Caco-2 (cell line): ENCODE measurements at regions of chr5 and their contacts with region 1.

Region 1: DNA sequence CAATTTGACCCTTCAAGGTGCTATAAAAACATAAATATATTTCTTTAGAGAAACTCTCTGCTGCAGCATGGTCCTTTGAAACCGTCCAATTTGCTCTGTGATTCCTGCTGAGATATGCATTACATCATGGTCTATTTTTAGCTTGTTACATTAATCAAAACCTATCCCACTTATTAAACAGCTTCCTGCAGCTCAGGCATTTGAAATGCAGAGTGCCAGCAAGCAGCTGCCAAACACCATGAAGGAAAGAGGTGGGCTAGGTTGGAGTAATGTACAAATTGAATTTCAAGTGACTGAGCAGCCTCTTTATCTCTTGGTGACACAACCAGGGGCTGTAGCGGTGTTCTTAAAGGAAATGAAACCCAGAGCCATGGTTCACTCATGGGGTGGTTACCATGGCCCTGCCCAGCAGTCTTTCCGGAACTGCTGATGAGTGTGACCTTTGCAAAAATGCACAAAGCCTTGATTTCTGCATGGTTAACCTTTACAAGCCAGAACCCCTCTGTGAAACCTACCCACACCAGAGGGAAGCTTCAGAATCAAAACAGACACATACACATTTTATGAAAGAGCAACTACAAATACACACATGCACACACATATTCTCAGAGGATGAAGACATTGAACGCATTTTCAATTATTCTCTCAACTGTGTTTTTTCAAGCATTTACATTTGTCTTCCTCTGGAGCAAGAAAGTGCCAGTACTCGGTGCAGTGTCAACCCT is 155.8 kb upstream of the ZNF608 start:
- DNase-seq: no peak
- H3K4me3 ChIP-seq: no peak overlapping the region
- H3K4me3 Mint-ChIP-seq: no peak overlapping the region
- H3K27ac Mint-ChIP-seq: no peak overlapping the region
- H3K4me1 ChIP-seq: peaks cover 14% of the 10 kb centered on the region
- H3K4me1 Mint-ChIP-seq: peaks cover 9% of the 10 kb centered on the region
- H3K27me3 ChIP-seq: no peaks in the 10 kb centered on the region
- H3K27me3 Mint-ChIP-seq: no peaks in the 10 kb centered on the region
- CTCF ChIP-seq: no peak

Region 2: DNA sequence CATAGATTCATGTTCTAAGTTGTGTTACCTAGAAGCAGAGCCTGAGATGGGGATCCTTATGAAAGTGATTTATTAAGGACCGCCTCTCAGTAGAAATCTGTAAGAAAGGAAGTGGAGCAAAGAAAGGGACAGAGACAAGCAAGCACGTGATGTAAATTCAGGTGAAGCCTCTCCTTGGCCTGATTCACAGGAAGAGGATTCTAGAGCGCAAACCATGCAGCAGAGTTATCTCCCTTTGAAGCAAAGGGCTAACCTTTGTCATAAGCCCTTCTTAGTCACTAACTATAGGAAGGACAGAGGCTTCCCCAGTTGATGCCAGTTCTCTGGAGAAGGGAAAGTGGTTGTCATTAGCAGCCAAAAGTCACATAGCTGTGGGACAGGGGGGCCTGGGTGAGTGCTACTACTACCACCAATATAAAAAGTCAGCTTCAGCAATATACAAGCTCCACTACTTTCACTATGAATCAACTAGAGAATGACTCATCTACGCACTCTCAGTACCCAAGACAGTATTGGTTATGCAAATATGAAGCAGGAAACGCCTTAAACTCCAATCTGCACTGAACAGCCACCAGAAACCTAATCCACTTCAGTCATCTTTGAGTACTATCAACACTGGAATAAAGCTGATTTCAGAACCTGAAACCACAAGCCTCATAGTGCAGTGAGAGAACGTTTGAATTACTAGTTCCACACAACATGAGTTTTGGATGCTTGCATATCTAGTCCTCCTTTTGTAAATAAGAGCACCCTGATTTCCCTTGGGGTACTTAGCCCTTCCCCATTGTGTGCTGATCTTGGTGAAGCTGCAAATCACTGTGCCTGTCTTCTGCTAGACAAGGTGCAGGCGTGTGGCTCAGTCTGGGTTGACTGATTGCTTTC is 318.5 kb before region 1 on chr5:
- CTCF ChIA-PET with region 1: no interaction called
- POLR2A ChIA-PET with region 1: no interaction called
- intact Hi-C with region 1: loop called (anchors 10 kb)
- DNase-seq: no peak
- H3K4me3 ChIP-seq: no peak overlapping the region
- H3K4me3 Mint-ChIP-seq: no peak overlapping the region
- H3K27ac Mint-ChIP-seq: peak overlapping the region; percentile 89
- H3K4me1 ChIP-seq: peaks cover 38% of the 10 kb centered on the region
- H3K4me1 Mint-ChIP-seq: peaks cover 30% of the 10 kb centered on the region
- H3K27me3 ChIP-seq: no peaks in the 10 kb centered on the region
- H3K27me3 Mint-ChIP-seq: no peaks in the 10 kb centered on the region
- CTCF ChIP-seq: no peak

Region 3: DNA sequence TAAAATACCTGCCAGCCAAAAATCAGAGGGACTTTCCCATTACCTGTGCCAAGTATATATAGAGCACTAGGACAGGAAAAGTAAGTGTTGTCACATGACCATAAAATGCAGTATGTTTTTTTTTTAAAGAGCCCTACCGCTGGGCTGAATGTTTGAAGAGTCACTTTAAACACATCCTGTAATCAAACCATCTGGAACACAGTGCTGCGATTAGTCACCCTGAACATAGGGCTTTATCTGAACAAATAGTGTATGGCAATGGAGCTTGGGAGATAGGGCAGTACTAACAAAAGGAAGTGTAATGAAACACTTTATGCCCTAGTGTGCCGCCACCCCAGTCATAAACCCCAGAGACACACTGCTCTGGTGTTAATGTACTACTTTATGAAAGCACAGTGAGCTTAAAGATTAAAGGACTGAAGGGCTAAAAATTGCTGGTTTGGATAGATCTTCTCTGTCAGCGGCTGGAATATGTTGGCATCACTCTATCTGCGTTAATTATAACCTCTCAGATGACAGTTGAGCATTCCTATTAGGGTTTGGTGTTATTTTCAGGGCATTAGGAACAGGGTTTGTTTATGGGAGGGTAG is 246.2 kb before region 1 on chr5:
- CTCF ChIA-PET with region 1: no interaction called
- POLR2A ChIA-PET with region 1: no interaction called
- intact Hi-C with region 1: loop called (anchors 1 kb)
- DNase-seq: peak; percentile 80 to 87
- H3K4me3 ChIP-seq: no peak overlapping the region
- H3K4me3 Mint-ChIP-seq: no peak overlapping the region
- H3K27ac Mint-ChIP-seq: no peak overlapping the region
- H3K4me1 ChIP-seq: peaks cover 72% of the 10 kb centered on the region
- H3K4me1 Mint-ChIP-seq: peaks cover 9% of the 10 kb centered on the region
- H3K27me3 ChIP-seq: no peaks in the 10 kb centered on the region
- H3K27me3 Mint-ChIP-seq: no peaks in the 10 kb centered on the region
- CTCF ChIP-seq: no peak

Region 4: GRCh38 chr5:124677374-124678351 is 224.6 kb before region 1 on chr5:
- CTCF ChIA-PET with region 1: no interaction called
- POLR2A ChIA-PET with region 1: no interaction called
- intact Hi-C with region 1: loop called (anchors 5 kb)
- DNase-seq: no peak
- H3K4me3 ChIP-seq: no peak overlapping the region
- H3K4me3 Mint-ChIP-seq: no peak overlapping the region
- H3K27ac Mint-ChIP-seq: peak overlapping the region; percentile 37
- H3K4me1 ChIP-seq: peaks cover 59% of the 10 kb centered on the region
- H3K4me1 Mint-ChIP-seq: peaks cover 42% of the 10 kb centered on the region
- H3K27me3 ChIP-seq: no peaks in the 10 kb centered on the region
- H3K27me3 Mint-ChIP-seq: no peaks in the 10 kb centered on the region
- CTCF ChIP-seq: no peak

Region 5: GRCh38 chr5:124920909-124921666 is 18.8 kb after region 1 on chr5:
- CTCF ChIA-PET with region 1: no interaction called
- POLR2A ChIA-PET with region 1: no interaction called
- intact Hi-C with region 1: no loop called
- DNase-seq: no peak
- H3K4me3 ChIP-seq: no peak overlapping the region
- H3K4me3 Mint-ChIP-seq: no peak overlapping the region
- H3K27ac Mint-ChIP-seq: no peak overlapping the region
- H3K4me1 ChIP-seq: peaks cover 47% of the 10 kb centered on the region
- H3K4me1 Mint-ChIP-seq: peaks cover 16% of the 10 kb centered on the region
- H3K27me3 ChIP-seq: no peaks in the 10 kb centered on the region
- H3K27me3 Mint-ChIP-seq: no peaks in the 10 kb centered on the region
- CTCF ChIP-seq: no peak

Region 6: DNA sequence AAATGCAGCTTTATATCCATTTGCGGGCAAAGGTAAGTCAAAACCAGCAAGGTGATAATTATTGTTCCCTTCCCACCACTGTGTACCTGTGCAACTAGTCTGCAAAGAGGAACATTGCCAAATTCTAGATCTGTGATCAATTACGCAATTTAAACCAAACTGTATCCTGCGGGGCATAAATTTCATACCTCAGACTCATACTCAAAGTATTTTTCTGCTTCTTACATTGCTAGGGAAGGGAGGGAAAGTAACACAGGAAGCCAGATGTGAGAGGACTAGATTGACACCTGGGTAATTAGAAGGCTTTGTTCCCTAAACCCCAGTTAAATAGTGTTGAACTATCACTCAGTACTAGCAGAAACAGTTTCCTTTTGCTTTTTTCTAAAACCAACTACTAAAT is 84.4 kb after region 1 on chr5:
- CTCF ChIA-PET with region 1: no interaction called
- POLR2A ChIA-PET with region 1: no interaction called
- intact Hi-C with region 1: no loop called
- DNase-seq: no peak
- H3K4me3 ChIP-seq: no peak overlapping the region
- H3K4me3 Mint-ChIP-seq: no peak overlapping the region
- H3K27ac Mint-ChIP-seq: no peak overlapping the region
- H3K4me1 ChIP-seq: peaks cover 16% of the 10 kb centered on the region
- H3K4me1 Mint-ChIP-seq: peaks cover 9% of the 10 kb centered on the region
- H3K27me3 ChIP-seq: no peaks in the 10 kb centered on the region
- H3K27me3 Mint-ChIP-seq: no peaks in the 10 kb centered on the region
- CTCF ChIP-seq: no peak

Region 7: GRCh38 chr5:125113328-125113727 is 211.1 kb after region 1 on chr5:
- CTCF ChIA-PET with region 1: no interaction called
- POLR2A ChIA-PET with region 1: no interaction called
- intact Hi-C with region 1: loop called (anchors 5 kb)
- DNase-seq: no peak
- H3K4me3 ChIP-seq: no peak overlapping the region
- H3K4me3 Mint-ChIP-seq: no peak overlapping the region
- H3K27ac Mint-ChIP-seq: no peak overlapping the region
- H3K4me1 ChIP-seq: peaks cover 22% of the 10 kb centered on the region
- H3K4me1 Mint-ChIP-seq: peaks cover 18% of the 10 kb centered on the region
- H3K27me3 ChIP-seq: no peaks in the 10 kb centered on the region
- H3K27me3 Mint-ChIP-seq: no peaks in the 10 kb centered on the region
- CTCF ChIP-seq: no peak

Region 8: DNA sequence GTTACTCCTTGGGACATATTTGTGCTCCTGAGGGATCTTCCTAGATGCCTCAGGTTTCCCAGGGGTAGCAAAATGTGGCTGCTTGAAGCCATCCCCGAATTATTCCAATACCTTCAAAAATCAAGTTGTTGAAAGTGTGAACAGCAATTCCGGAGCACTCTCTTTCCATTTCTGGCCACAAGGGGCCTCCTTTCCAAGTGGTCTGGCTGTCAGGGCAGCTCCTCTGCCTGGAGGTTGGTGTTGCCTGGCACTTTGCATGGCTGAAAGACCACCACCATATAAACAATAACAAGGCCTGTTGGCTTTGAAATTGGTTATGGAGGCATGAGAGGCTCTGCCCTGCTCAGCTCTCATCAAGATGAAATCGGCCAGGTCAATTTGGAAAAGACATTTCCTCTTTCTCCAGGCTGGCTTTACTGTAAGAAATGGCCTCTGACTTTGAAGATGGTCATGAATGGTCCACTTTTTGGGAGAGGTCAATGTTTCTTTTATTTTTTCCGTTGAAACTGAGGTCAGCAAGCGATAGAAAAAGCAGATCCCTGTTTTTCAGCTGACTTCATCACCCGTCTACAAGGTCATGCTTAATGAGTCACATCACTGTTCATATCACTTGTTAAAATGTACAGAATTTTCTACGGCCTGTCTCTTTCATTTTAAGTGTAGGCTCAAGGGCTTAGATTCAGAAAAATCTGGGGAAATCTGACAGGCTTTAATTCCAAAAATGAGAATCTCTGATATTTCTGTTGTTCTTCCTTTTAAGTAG is 325.3 kb after region 1 on chr5:
- CTCF ChIA-PET with region 1: no interaction called
- POLR2A ChIA-PET with region 1: no interaction called
- intact Hi-C with region 1: no loop called
- DNase-seq: peak; percentile 42 to 49
- H3K4me3 ChIP-seq: no peak overlapping the region
- H3K4me3 Mint-ChIP-seq: no peak overlapping the region
- H3K27ac Mint-ChIP-seq: no peak overlapping the region
- H3K4me1 ChIP-seq: no peaks in the 10 kb centered on the region
- H3K4me1 Mint-ChIP-seq: peaks cover 5% of the 10 kb centered on the region
- H3K27me3 ChIP-seq: no peaks in the 10 kb centered on the region
- H3K27me3 Mint-ChIP-seq: no peaks in the 10 kb centered on the region
- CTCF ChIP-seq: peak; percentile 37 to 68